ENCODE measurements at regions of chr10 and their contacts with region 1.

Region 1: GRCh38 chr10:128125944-128126764 is at the start of gene MKI67:
- DNase-seq: peak; percentile 74 to 95 (median 89)
- ATAC-seq: peak; percentile 94
- H3K4me3 ChIP-seq: peak within 1 kb of the TSS; percentile 75 to 84
- H3K4me3 Mint-ChIP-seq: peak within 1 kb of the TSS; percentile 87
- H3K27ac ChIP-seq: peak within 1 kb of the TSS; percentile 29 to 36
- H3K27ac Mint-ChIP-seq: no peak within 1 kb of the TSS
- H3K4me1 ChIP-seq: peaks cover 17% of the 10 kb centered on the region
- H3K4me1 Mint-ChIP-seq: peaks cover 26% of the 10 kb centered on the region
- H3K27me3 ChIP-seq: peaks cover 11 to 14% of the 10 kb centered on the region in 2 experiments
- H3K27me3 Mint-ChIP-seq: peaks cover 30% of the 10 kb centered on the region
- CTCF ChIP-seq: no peak
- total RNA-seq, gene MKI67: 1.5 to 1.9 TPM

Region 2: DNA sequence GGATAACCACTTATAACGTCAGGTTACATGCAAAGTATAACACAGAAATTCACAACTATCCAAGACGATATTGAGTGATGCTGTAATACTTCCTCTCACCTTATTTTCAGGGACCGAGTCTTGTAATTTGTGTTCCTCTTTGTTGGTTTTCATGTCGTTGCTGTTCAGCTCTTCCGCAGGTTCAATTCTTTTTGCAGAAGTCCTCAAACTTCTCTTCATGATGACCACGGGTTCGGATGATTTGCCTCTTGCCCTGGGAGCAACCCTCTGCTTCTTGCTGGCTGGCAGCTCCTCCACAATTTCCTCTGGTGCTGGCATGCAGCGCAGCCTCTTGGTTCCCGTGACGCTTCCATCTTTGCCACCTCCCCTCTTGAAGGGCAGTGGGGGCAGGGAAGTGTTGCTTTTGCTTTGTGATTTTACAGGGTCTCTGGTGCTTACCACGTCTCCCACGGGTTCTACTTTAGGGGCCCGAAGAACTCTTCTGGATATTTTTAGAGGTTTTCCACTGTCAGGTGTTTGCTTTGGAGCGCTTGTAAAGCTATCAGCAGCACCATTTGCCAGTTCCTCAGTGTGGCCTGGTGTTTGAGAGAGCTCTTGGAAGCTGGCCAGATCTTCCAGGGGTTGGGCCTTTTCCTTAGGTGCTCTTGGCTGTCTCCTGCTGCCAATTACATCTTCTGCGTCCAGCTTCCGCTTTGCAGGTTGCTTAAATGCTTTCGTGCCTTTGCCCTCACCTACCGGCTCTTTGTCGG is 23.5 kb before region 1 on chr10:
- CTCF ChIA-PET with region 1: interaction called, 4 read pairs
- POLR2A ChIA-PET with region 1: interaction called, 13 read pairs
- intact Hi-C with region 1: loop called (anchors 1 to 2 kb)
- DNase-seq: no peak
- ATAC-seq: no peak
- H3K4me3 ChIP-seq: peak overlapping the region in 1 of 2 experiments; percentile 25
- H3K4me3 Mint-ChIP-seq: peak overlapping the region; percentile 33
- H3K27ac ChIP-seq: peak overlapping the region; percentile 23 to 31
- H3K27ac Mint-ChIP-seq: peak overlapping the region; percentile 70
- H3K4me1 ChIP-seq: peaks cover 46% of the 10 kb centered on the region
- H3K4me1 Mint-ChIP-seq: peaks cover 52% of the 10 kb centered on the region
- H3K27me3 ChIP-seq: no peaks in the 10 kb centered on the region
- H3K27me3 Mint-ChIP-seq: no peaks in the 10 kb centered on the region
- CTCF ChIP-seq: no peak

Region 3: DNA sequence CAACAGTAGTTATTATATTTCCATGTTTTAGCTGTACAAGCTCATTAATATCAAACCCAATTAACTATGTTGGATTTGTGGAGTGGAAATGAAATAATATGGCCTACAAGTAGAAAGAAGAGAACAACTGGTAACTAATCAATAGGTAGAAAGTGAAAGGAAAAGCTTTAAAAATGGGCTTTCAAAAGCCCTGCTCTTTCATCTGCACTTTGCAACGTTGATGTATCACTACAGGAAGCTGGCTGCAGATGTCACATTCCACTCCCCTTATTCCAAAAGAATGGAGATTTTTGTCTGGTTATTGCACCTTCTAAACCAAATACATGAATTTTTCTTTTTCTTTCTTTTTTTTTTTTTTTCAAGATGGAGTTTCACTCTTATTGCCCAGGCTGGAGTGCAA is 11.7 kb after region 1 on chr10:
- CTCF ChIA-PET with region 1: no interaction called
- POLR2A ChIA-PET with region 1: no interaction called
- intact Hi-C with region 1: no loop called
- DNase-seq: no peak
- ATAC-seq: no peak
- H3K4me3 ChIP-seq: no peak overlapping the region
- H3K4me3 Mint-ChIP-seq: no peak overlapping the region
- H3K27ac ChIP-seq: no peak overlapping the region
- H3K27ac Mint-ChIP-seq: no peak overlapping the region
- H3K4me1 ChIP-seq: no peaks in the 10 kb centered on the region
- H3K4me1 Mint-ChIP-seq: peaks cover 4% of the 10 kb centered on the region
- H3K27me3 ChIP-seq: no peaks in the 10 kb centered on the region
- H3K27me3 Mint-ChIP-seq: no peaks in the 10 kb centered on the region
- CTCF ChIP-seq: no peak

Region 4: GRCh38 chr10:129466703-129467358 is 1340.7 kb after region 1 on chr10 and contains the start of gene MGMT:
- CTCF ChIA-PET with region 1: no interaction called
- POLR2A ChIA-PET with region 1: no interaction called
- intact Hi-C with region 1: loop called in 1 of 2 experiments (anchors 10 kb)
- DNase-seq: peak; percentile 96 to 99 (median 98)
- ATAC-seq: peak; percentile 98
- H3K4me3 ChIP-seq: peak within 1 kb of the TSS; percentile 83 to 89
- H3K4me3 Mint-ChIP-seq: peak within 1 kb of the TSS; percentile 85
- H3K27ac ChIP-seq: peak within 1 kb of the TSS; percentile 63 to 78
- H3K27ac Mint-ChIP-seq: peak within 1 kb of the TSS; percentile 86
- H3K4me1 ChIP-seq: peaks cover 17% of the 10 kb centered on the region
- H3K4me1 Mint-ChIP-seq: peaks cover 27% of the 10 kb centered on the region
- H3K27me3 ChIP-seq: no peaks in the 10 kb centered on the region
- H3K27me3 Mint-ChIP-seq: no peaks in the 10 kb centered on the region
- CTCF ChIP-seq: no peak
- total RNA-seq, gene MGMT: 6.4 to 7.0 TPM

Measured in CD8-positive, alpha-beta T cell (primary cell).